Prostate gland (tissue), 2 donors: ENCODE measurements at regions of chr1 and their contacts with region 1.

Region 1: DNA sequence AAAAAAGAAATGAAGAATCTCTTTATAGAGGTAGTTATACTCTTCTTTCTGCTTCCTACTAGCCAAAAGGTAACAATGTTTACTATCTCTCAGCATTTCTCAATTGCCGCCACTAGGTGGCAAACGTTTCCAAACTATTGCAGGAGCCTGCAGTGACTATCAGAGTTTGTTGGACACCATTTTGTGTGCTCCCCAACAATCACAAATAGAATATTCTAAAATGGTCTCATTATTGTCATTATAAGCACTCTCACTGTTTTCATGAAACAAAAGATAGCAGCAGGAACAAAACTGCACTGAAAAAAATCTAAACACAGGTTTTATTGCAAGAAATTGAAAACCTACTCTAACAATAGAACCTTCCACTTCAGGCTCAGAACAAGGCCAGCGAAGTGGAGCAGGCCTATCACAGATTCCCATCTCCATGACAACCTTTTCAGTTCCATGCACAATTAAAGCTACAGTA is 83.9 kb upstream of the PLPPR4 start:
- DNase-seq: peak; percentile 79
- H3K4me3 ChIP-seq: no peak overlapping the region
- H3K27ac ChIP-seq: no peak overlapping the region
- H3K4me1 ChIP-seq: no peaks in the 10 kb centered on the region
- H3K27me3 ChIP-seq: no peaks in the 10 kb centered on the region
- CTCF ChIP-seq: peak; percentile 54 to 90 (median 76)
- POLR2A ChIP-seq: no peak

Region 2: GRCh38 chr1:99481391-99481996 is 301.1 kb after region 1 on chr1:
- intact Hi-C with region 1: loop called (anchors 5 kb)
- DNase-seq: peak; percentile 57
- H3K4me3 ChIP-seq: no peak overlapping the region
- H3K27ac ChIP-seq: no peak overlapping the region
- H3K4me1 ChIP-seq: no peaks in the 10 kb centered on the region
- H3K27me3 ChIP-seq: no peaks in the 10 kb centered on the region
- CTCF ChIP-seq: peak; percentile 13 to 80 (median 72)
- POLR2A ChIP-seq: no peak

Region 3: DNA sequence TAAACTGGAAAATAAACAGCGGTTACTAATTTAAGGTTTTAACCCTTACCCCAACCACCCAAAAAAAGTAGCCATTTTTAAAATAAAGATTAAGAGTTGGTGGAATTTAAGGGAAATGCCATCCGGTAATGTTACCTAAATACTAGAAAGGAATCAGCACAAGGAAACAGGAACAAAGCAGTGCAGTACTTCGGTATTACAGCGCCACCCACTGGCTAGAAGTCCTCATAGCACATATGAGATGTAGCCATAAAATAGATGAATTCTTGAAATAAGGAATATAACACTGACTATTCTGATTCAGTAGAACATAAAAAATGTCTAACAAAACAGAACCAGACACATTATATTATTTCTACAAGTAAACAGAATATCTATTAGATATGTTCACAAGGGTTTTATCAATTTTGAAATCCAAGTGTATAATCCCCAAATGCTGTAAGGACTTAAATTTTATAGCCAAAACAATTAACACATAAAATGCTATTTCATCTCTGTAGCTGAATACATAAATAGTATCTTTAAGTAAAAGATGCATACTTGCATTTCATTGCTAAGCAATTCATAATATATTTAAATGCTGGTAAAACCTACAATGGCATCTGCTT is 527.3 kb after region 1 on chr1:
- intact Hi-C with region 1: loop called (anchors 5 kb)
- DNase-seq: peak; percentile 58
- H3K4me3 ChIP-seq: no peak overlapping the region
- H3K27ac ChIP-seq: no peak overlapping the region
- H3K4me1 ChIP-seq: no peaks in the 10 kb centered on the region
- H3K27me3 ChIP-seq: no peaks in the 10 kb centered on the region
- CTCF ChIP-seq: peak; percentile 37 to 86 (median 86)
- POLR2A ChIP-seq: no peak